Activated naive CD4-positive, alpha-beta T cell treated with anti-CD3 and anti-CD28 coated beads for 36 hours (primary cell): ENCODE measurements at regions of chr3 and their contacts with region 1.

Region 1: GRCh38 chr3:50358911-50359759 is at the start of gene TMEM115:
- DNase-seq: peak; percentile 98
- H3K4me3 Mint-ChIP-seq: peak within 1 kb of the TSS; percentile 97
- H3K27ac Mint-ChIP-seq: peak within 1 kb of the TSS; percentile 89
- H3K4me1 Mint-ChIP-seq: peaks cover 43% of the 10 kb centered on the region
- H3K27me3 Mint-ChIP-seq: no peaks in the 10 kb centered on the region
- total RNA-seq, gene TMEM115: 10.6 to 11.1 TPM

Region 2: GRCh38 chr3:50235716-50236496 is 123.2 kb before region 1 on chr3 and contains the start of gene GNAI2:
- CTCF ChIA-PET with region 1: no interaction called
- intact Hi-C with region 1: loop called (anchors 1 kb)
- DNase-seq: peak; percentile 99
- H3K4me3 Mint-ChIP-seq: peak within 1 kb of the TSS; percentile 95
- H3K27ac Mint-ChIP-seq: peak within 1 kb of the TSS; percentile 92
- H3K4me1 Mint-ChIP-seq: peaks cover 33% of the 10 kb centered on the region
- H3K27me3 Mint-ChIP-seq: no peaks in the 10 kb centered on the region
- total RNA-seq, gene GNAI2: 272 to 276 TPM

Region 3: DNA sequence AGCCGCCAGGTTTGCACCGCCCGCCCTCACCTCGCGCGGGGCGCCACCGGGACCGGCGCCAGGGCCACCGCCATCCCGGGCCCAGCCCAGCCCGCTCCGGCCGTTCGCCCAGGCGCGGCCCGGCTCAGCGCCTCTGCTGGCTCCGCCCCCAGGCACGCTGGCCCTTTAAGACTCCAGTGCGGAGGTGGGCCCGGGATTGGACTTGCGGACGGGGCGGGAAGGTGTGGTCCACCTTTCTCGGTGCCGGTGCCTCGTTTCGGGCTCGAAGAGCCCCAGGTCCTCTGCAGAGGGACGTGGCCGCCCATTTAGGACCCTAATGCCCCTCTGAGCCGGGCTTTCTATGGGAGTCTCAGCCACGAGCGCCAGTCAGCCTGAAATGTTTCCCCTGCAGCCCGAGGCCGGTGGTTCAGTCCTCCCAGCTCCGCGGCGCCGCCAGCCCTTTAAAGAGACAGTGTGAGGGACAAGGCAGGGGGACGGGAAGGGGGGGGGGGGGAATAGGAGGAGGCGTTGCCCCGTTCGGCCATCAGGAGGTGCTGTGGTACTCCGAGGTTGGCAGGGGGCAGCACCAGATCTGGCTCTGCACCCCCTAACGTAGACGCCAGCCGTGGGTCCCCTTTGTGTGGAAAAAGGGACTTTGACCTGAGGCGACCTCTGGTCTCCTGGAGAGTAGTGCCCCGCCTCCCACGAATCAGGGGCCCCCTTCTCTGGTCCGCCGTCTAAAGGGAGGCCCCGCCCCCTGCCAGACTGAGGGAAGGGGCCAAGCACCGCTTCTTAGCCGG is 37.6 kb before region 1 on chr3:
- CTCF ChIA-PET with region 1: interaction called, 3 read pairs
- intact Hi-C with region 1: loop called (anchors 1 kb)
- DNase-seq: peak; percentile 83
- H3K4me3 Mint-ChIP-seq: peak overlapping the region; percentile 86
- H3K27ac Mint-ChIP-seq: peak overlapping the region; percentile 80
- H3K4me1 Mint-ChIP-seq: peaks cover 38% of the 10 kb centered on the region
- H3K27me3 Mint-ChIP-seq: no peaks in the 10 kb centered on the region

Region 4: DNA sequence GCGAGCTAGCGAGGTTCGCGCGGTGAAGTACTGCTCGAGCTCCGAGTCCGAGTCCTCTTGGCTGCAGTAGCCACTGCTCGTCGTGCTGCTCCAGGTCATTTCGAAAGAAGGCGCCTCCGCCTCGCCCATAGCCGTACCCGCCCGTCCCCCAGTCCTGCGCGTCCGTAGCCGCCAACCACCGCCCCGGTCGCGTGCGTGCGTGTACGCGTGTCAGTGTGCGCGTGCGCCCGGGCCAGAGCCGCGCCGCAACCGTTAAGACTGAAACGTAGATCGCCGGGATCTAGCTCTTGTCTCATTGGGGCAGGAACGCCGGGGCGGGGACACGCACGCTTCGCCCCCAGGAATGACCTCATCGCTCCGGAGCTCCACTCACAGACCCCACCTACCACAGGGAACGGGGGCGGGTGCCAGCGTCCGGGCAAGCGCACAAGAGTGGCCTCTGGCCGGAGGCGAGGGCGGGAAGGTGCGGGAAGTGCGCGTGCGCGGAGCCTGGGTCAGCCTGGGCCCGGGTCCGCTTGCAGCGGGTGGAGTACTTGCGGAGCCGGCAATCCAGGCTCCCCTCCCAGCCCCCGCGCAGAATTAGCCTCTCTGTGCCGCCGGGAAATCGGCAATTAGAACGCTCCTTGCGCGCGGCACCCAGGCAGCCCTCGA is 21.8 kb before region 1 on chr3:
- CTCF ChIA-PET with region 1: no interaction called
- intact Hi-C with region 1: loop called (anchors 1 kb)
- DNase-seq: peak; percentile 99
- H3K4me3 Mint-ChIP-seq: peak overlapping the region; percentile 94
- H3K27ac Mint-ChIP-seq: peak overlapping the region; percentile 94
- H3K4me1 Mint-ChIP-seq: peaks cover 57% of the 10 kb centered on the region
- H3K27me3 Mint-ChIP-seq: no peaks in the 10 kb centered on the region

Region 5: GRCh38 chr3:50532058-50532705 is 173.0 kb after region 1 on chr3:
- CTCF ChIA-PET with region 1: no interaction called
- intact Hi-C with region 1: no loop called
- DNase-seq: no peak
- H3K4me3 Mint-ChIP-seq: no peak overlapping the region
- H3K27ac Mint-ChIP-seq: no peak overlapping the region
- H3K4me1 Mint-ChIP-seq: no peaks in the 10 kb centered on the region
- H3K27me3 Mint-ChIP-seq: peaks cover 3% of the 10 kb centered on the region

Region 6: GRCh38 chr3:50600841-50601591 is 241.9 kb after region 1 on chr3:
- CTCF ChIA-PET with region 1: no interaction called
- intact Hi-C with region 1: loop called (anchors 1 kb)
- DNase-seq: peak; percentile 95
- H3K4me3 Mint-ChIP-seq: peak overlapping the region; percentile 68
- H3K27ac Mint-ChIP-seq: peak overlapping the region; percentile 100
- H3K4me1 Mint-ChIP-seq: peaks cover 74% of the 10 kb centered on the region
- H3K27me3 Mint-ChIP-seq: no peaks in the 10 kb centered on the region

Region 7: GRCh38 chr3:50759015-50759414 is 399.9 kb after region 1 on chr3:
- CTCF ChIA-PET with region 1: no interaction called
- intact Hi-C with region 1: no loop called
- DNase-seq: no peak
- H3K4me3 Mint-ChIP-seq: no peak overlapping the region
- H3K27ac Mint-ChIP-seq: no peak overlapping the region
- H3K4me1 Mint-ChIP-seq: no peaks in the 10 kb centered on the region
- H3K27me3 Mint-ChIP-seq: no peaks in the 10 kb centered on the region

Region 8: GRCh38 chr3:51384726-51385473 is 1025.8 kb after region 1 on chr3 and contains the start of gene MANF:
- CTCF ChIA-PET with region 1: no interaction called
- intact Hi-C with region 1: loop called (anchors 10 kb)
- DNase-seq: peak; percentile 99
- H3K4me3 Mint-ChIP-seq: peak within 1 kb of the TSS; percentile 97
- H3K27ac Mint-ChIP-seq: peak within 1 kb of the TSS; percentile 98
- H3K4me1 Mint-ChIP-seq: peaks cover 47% of the 10 kb centered on the region
- H3K27me3 Mint-ChIP-seq: no peaks in the 10 kb centered on the region
- total RNA-seq, gene MANF: 91.7 to 108 TPM